Posterior vena cava (tissue), 2 donors: ENCODE measurements at regions of chr11 and their contacts with region 1.

Region 1: GRCh38 chr11:34357701-34358257 is at the start of gene ABTB2:
- DNase-seq: peak; percentile 100
- total RNA-seq, gene ABTB2: 8.6 to 8.7 TPM

Region 2: GRCh38 chr11:33996498-33997454 is 361.0 kb before region 1 on chr11:
- intact Hi-C with region 1: loop called (anchors 5 to 10 kb)
- DNase-seq: no peak

Region 3: DNA sequence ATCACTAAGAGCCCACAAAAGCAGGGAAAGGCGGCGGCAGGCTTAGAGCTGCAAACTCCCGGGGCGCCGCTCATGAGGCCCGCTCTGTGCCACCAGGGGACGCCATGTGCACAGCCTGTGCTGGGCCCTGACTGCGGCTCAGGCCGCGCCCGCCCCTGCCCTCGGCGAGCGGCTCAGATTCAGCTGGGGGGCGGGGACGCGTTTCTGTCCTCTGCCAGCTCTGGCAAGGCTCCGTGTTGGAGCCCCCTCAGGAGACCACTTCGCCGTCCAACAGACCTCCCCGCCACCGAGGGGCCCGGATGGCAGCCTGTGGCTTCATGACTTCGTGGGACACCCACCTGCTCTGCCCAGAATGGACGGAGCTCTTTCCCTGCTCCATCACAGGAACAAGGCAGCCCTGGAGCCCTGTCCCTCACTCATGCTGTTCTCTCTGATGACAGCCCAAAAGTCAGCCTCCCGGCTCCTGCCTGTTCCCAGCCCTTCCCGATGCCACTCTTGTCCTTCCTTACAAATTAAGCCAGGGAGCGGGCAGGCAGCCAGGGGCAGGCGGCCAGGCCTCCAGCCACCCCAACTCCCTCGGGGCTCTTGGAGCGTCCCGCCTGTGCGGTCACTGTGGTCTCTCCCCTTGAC is 183.3 kb before region 1 on chr11:
- intact Hi-C with region 1: loop called (anchors 2 to 5 kb)
- DNase-seq: peak; percentile 95

Region 4: GRCh38 chr11:34192481-34193401 is 165.0 kb before region 1 on chr11:
- intact Hi-C with region 1: loop called in 1 of 2 experiments (anchors 5 kb)
- DNase-seq: peak; percentile 94

Region 5: DNA sequence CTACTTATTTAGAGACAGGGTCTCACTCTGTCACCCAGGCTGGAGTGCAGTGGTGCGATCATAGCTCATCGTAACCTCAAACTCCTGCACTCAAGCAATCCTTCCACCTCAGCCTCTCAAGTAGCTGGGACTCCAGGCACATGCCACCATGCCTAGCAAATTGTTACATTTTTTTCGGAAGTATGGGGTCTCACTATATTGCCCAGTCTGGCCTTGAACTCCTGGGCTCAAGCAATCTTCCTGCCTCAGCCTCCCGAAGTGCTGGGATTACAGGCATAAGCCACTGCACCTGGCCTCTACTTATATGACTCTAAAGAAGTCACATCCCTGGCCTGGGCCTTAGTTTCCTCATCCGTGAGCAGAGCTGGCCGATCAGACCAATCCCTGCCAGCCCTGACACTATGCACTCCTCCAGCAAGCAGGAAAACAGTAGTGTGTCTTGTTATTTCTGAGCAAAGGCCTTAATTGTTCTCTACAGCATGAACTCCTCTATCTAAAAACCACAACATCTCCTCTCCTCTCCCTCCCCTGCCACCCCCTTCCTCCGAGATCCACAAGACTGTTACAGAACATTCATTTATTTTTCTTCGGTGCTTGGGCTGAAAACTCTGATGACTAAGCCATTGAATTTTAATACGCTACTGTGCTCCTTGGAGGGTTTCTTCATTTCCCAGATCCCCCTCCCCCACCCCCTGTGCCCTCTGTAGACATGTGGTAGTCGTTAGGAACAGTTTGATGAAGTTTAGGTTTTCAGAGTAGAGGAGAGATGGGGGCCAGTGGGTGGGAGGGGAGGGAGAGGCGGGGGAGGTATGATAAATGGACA is 91.5 kb before region 1 on chr11:
- intact Hi-C with region 1: loop called in 1 of 2 experiments (anchors 10 kb)
- DNase-seq: no peak

Region 6: GRCh38 chr11:34405079-34405858 is 47.5 kb after region 1 on chr11:
- intact Hi-C with region 1: no loop called
- DNase-seq: no peak